AG04449 (cell line): ENCODE measurements at regions of chr1 and their contacts with region 1.

Region 1: GRCh38 chr1:85584264-85584781 is 3.8 kb downstream of the CCN1 start:
- DNase-seq: peak; percentile 97
- H3K4me3 ChIP-seq: peak overlapping the region; percentile 98
- CTCF ChIP-seq: no peak

Region 2: DNA sequence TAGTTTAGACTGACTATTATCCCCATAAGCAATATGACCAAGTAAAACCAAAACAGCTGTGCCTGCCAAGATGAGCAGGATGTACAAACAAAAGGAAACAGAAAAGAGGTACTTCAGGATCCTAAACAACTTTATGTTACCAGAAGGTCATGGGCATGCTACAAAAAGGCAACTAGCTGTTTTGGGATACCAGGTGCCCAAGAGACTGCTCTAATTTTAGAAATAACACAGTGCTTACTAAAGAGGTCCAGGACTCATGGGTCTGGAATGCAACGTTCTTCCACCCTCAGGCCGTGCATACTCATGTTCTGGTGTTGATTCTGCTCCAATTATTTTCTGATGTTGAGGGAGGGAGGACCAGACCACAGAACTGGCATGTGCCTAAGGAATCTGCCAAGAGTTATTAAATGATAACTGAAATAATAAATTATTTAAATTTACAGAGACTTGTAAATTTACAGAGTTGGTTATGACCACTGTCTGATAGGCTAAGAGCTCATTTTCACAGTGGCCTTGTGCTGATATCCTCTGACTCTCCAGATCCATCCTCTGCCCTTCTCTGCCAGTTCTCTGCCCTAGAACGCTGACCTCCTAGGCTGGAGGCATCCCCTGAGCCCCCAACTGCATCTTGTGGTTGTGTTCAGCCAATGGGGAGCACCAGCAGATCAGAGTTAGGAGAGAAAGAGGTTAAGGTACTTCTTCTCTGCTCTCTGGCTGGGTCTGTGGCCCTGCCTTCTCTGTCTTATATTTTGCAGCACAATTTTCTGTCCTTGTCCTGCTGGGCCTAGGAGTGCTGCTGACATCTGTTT is 270.2 kb before region 1 on chr1:
- CTCF ChIA-PET with region 1: interaction called, 14 read pairs
- POLR2A ChIA-PET with region 1: interaction called, 11 read pairs
- DNase-seq: peak; percentile 93
- H3K4me3 ChIP-seq: no peak overlapping the region
- CTCF ChIP-seq: no peak

Region 3: GRCh38 chr1:85607126-85607912 is 23.0 kb after region 1 on chr1:
- CTCF ChIA-PET with region 1: interaction called, 15 read pairs
- POLR2A ChIA-PET with region 1: interaction called, 156 read pairs
- DNase-seq: peak; percentile 100
- H3K4me3 ChIP-seq: no peak overlapping the region
- CTCF ChIP-seq: no peak

Region 4: GRCh38 chr1:85623051-85623471 is 38.7 kb after region 1 on chr1:
- CTCF ChIA-PET with region 1: no interaction called
- POLR2A ChIA-PET with region 1: interaction called, 52 read pairs
- DNase-seq: peak; percentile 73
- H3K4me3 ChIP-seq: no peak overlapping the region
- CTCF ChIP-seq: no peak

Region 5: DNA sequence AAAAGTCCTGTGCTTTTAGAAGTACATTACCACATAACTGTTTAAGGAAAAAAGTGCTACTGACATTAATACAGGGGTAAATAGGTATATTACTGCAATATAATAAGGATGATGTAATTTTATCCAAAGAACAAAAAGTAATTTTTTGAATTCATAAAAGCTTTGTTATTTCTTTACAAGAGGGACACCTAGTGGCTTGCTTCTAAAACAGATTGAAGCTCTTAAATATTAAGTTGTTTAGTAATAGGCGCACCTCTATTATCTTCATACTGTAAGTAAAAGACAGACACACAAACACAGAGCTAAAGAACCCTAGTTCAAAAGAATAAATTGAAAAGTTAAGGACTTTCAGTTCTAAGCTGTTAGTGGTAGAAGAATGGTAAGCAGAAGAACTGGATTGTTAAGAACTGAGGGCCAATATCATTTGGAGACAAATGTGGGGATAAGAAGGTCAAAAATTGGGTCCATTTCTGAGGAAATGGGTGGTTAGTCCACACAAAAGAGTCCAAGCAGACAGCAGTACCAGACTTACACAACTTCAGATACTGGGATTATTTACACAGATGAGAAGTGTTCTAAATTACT is 108.5 kb after region 1 on chr1:
- CTCF ChIA-PET with region 1: interaction called, 161 read pairs
- POLR2A ChIA-PET with region 1: interaction called, 63 read pairs
- DNase-seq: no peak
- H3K4me3 ChIP-seq: no peak overlapping the region
- CTCF ChIP-seq: peak; percentile 1

Region 6: DNA sequence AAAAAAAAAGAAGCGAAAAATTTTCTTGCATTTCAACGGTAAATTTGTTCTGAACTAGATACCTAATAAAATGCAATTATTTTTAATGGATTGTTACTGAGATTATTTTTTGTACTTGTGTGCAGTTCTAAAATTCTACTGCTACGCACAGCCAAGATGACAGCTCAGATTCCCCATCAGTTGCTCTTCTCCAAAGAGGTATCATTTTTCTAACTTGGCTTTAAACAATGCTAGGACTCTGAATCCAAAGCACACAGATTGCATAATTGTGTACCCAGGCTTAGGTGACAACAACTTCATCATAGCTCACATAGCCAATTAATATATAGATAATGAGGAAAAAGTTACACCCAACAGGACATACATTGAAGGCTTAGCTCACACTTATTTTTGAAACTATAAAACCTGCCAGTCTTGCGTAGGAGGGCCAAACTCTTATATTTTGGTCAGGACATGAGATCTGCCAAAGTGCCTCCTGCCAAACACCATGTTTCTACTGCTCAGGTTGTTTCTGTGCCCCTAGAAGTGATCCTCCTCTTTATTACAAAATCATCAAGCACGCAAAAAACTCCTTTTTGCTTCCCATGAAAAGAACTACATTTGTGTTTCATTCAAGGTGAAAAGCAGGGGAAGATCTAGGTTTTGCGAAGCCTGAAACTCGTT is 134.5 kb after region 1 on chr1:
- CTCF ChIA-PET with region 1: no interaction called
- POLR2A ChIA-PET with region 1: no interaction called
- DNase-seq: no peak
- H3K4me3 ChIP-seq: no peak overlapping the region
- CTCF ChIP-seq: no peak